Lower leg skin (tissue), 4 donors: ENCODE measurements at regions of chr10 and their contacts with region 1.

Region 1: GRCh38 chr10:13299437-13300287 is at the start of gene PHYH:
- DNase-seq: peak; percentile 80 to 98
- H3K4me3 ChIP-seq: peak within 1 kb of the TSS; percentile 82
- CTCF ChIP-seq: no peak
- POLR2A ChIP-seq: peak in 1 of 2 donors; percentile 51
- total RNA-seq, gene PHYH: 10.9 to 26.6 (median 17.3) TPM

Region 2: DNA sequence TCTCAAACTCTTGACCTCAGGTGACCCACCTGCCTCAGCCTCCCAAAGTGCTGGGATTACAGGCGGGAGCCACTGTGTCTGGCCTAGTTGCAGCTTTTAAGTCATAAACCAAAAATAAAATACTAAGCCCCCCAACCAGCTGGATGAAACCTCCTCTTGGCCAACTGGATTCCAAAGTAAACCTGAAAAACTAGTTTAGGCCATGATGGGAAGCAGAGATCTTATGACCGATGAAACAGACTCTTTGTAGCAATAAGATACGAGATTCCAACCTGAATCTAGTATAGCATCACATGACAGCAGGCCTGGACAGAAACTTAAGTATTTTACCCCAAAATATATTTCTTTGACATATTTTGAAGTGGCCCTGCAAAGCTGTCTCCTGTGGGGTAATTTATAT is 147.4 kb before region 1 on chr10:
- intact Hi-C with region 1: no loop called
- DNase-seq: no peak
- H3K4me3 ChIP-seq: no peak overlapping the region
- CTCF ChIP-seq: no peak
- POLR2A ChIP-seq: no peak

Region 3: DNA sequence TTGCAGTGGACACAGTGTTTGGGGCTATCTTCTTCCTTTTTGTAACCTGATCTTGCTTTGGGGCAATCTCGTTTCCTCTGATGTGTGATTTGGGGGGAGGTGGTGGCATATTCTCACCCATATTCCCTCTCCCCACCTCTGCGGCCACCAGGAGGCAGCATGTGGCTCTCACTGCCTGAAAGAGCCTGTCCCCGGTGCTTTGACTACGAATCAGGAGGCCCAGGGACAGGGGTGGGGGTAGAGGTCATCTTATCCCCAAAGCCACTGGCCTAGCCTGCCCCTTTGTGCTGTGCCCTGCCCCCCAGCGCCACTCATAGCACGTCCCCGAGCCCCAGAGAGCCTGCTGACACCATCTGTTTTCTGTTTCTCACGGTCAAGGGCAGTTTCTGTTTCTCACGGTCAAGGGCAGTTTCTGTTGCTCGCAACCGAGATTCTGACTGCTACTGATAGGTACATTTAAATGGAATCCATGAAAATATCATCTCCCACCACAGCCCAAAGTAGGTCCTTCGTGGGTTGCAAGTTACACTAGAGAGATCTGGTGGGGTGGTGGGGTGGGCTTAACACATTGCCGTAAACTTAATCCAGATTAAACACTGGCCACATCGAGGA is 28.0 kb before region 1 on chr10:
- intact Hi-C with region 1: no loop called
- DNase-seq: peak; percentile 13 to 85
- H3K4me3 ChIP-seq: no peak overlapping the region
- CTCF ChIP-seq: no peak
- POLR2A ChIP-seq: no peak

Region 4: GRCh38 chr10:13346283-13347042 is 46.8 kb after region 1 on chr10:
- intact Hi-C with region 1: loop called (anchors 1 kb)
- DNase-seq: no peak
- H3K4me3 ChIP-seq: peak overlapping the region; percentile 85
- CTCF ChIP-seq: no peak
- POLR2A ChIP-seq: no peak